ENCODE measurements at regions of chr7 and their contacts with region 1.

Region 1: GRCh38 chr7:85041605-85042216 is 145.1 kb downstream of the SEMA3D start:
- DNase-seq: peak; percentile 73 to 77
- H3K4me3 ChIP-seq: no peak overlapping the region
- H3K4me3 Mint-ChIP-seq: no peak overlapping the region
- H3K27ac Mint-ChIP-seq: no peak overlapping the region
- H3K4me1 ChIP-seq: 0 out of 2 replicates have a peak, but pooled peaks cover 6% of the 10 kb centered on the region
- H3K4me1 Mint-ChIP-seq: no peaks in the 10 kb centered on the region
- H3K27me3 ChIP-seq: no peaks in the 10 kb centered on the region
- H3K27me3 Mint-ChIP-seq: no peaks in the 10 kb centered on the region
- CTCF ChIP-seq: peak; percentile 82 to 85

Region 2: DNA sequence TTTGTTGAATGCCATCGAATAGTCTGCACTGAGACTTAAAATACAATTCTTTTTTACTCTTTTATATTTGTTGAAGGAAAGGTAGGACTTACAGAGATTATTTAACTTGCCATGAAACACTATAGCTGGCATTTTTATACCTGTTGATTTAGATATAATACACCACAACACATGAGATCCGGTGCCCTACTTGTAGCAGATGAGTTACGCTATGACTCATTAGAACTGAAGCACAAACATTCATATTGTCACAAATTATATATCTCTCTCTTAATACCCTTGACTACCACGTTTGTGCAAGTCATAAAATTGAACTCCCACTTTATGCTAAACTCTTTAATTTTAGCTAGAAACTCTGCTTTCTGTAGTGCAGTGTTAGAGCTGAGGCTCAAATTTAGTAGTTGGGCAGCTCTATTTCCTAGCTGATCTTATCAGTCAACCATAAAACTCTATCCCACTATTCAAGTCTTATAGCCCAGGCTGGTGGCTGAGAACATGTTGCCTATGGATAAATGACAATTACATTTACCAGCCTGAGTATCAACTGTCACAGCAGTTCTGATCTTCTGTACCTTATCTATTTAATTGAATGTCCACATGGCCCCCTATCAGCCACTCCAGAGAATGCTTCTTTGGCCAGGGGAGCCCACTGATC is 282.6 kb after region 1 on chr7:
- CTCF ChIA-PET with region 1: no interaction called
- POLR2A ChIA-PET with region 1: no interaction called
- intact Hi-C with region 1: loop called (anchors 10 kb)
- DNase-seq: no peak
- H3K4me3 ChIP-seq: no peak overlapping the region
- H3K4me3 Mint-ChIP-seq: no peak overlapping the region
- H3K27ac Mint-ChIP-seq: no peak overlapping the region
- H3K4me1 ChIP-seq: no peaks in the 10 kb centered on the region
- H3K4me1 Mint-ChIP-seq: peaks cover 6% of the 10 kb centered on the region
- H3K27me3 ChIP-seq: no peaks in the 10 kb centered on the region
- H3K27me3 Mint-ChIP-seq: no peaks in the 10 kb centered on the region
- CTCF ChIP-seq: no peak

Region 3: GRCh38 chr7:85464042-85464651 is 422.4 kb after region 1 on chr7:
- CTCF ChIA-PET with region 1: interaction called, 3 read pairs
- POLR2A ChIA-PET with region 1: no interaction called
- intact Hi-C with region 1: loop called (anchors 2 kb)
- DNase-seq: no peak
- H3K4me3 ChIP-seq: no peak overlapping the region
- H3K4me3 Mint-ChIP-seq: no peak overlapping the region
- H3K27ac Mint-ChIP-seq: no peak overlapping the region
- H3K4me1 ChIP-seq: no peaks in the 10 kb centered on the region
- H3K4me1 Mint-ChIP-seq: no peaks in the 10 kb centered on the region
- H3K27me3 ChIP-seq: no peaks in the 10 kb centered on the region
- H3K27me3 Mint-ChIP-seq: peaks cover 6% of the 10 kb centered on the region
- CTCF ChIP-seq: peak in 1 of 2 experiments; percentile 22

Region 4: GRCh38 chr7:85749696-85750453 is 708.2 kb after region 1 on chr7:
- CTCF ChIA-PET with region 1: no interaction called
- POLR2A ChIA-PET with region 1: no interaction called
- intact Hi-C with region 1: loop called (anchors 5 kb)
- DNase-seq: no peak
- H3K4me3 ChIP-seq: no peak overlapping the region
- H3K4me3 Mint-ChIP-seq: no peak overlapping the region
- H3K27ac Mint-ChIP-seq: no peak overlapping the region
- H3K4me1 ChIP-seq: no peaks in the 10 kb centered on the region; the same call in 1 of the 2 replicates
- H3K4me1 Mint-ChIP-seq: peaks cover 12% of the 10 kb centered on the region
- H3K27me3 ChIP-seq: no peaks in the 10 kb centered on the region
- H3K27me3 Mint-ChIP-seq: no peaks in the 10 kb centered on the region
- CTCF ChIP-seq: no peak

Region 5: GRCh38 chr7:85851571-85852193 is 810.0 kb after region 1 on chr7:
- CTCF ChIA-PET with region 1: no interaction called
- POLR2A ChIA-PET with region 1: no interaction called
- intact Hi-C with region 1: loop called (anchors 1 kb)
- DNase-seq: peak in 1 of 2 experiments; percentile 17
- H3K4me3 ChIP-seq: no peak overlapping the region
- H3K4me3 Mint-ChIP-seq: no peak overlapping the region
- H3K27ac Mint-ChIP-seq: no peak overlapping the region
- H3K4me1 ChIP-seq: no peaks in the 10 kb centered on the region
- H3K4me1 Mint-ChIP-seq: no peaks in the 10 kb centered on the region
- H3K27me3 ChIP-seq: no peaks in the 10 kb centered on the region
- H3K27me3 Mint-ChIP-seq: peaks cover 8% of the 10 kb centered on the region
- CTCF ChIP-seq: peak; percentile 32 to 36

Measured in Caco-2 (cell line).